ENCODE measurements at regions of chr1 and their contacts with region 1.

Region 1: GRCh38 chr1:95223110-95223509 is 10.9 kb upstream of the RWDD3 start:
- DNase-seq: no peak
- H3K4me3 ChIP-seq: no peak overlapping the region
- H3K27ac ChIP-seq: no peak overlapping the region
- H3K4me1 ChIP-seq: no peaks in the 10 kb centered on the region
- H3K27me3 ChIP-seq: no peaks in the 10 kb centered on the region
- CTCF ChIP-seq: no peak

Region 2: GRCh38 chr1:95179205-95179986 is 43.7 kb before region 1 on chr1:
- intact Hi-C with region 1: loop called (anchors 10 kb)
- DNase-seq: no peak
- H3K4me3 ChIP-seq: no peak overlapping the region
- H3K27ac ChIP-seq: no peak overlapping the region
- H3K4me1 ChIP-seq: peaks cover 0 to 16% (median 9%) of the 10 kb centered on the region in 4 donors
- H3K27me3 ChIP-seq: no peaks in the 10 kb centered on the region
- CTCF ChIP-seq: no peak

Measured in tibial artery (tissue), 4 donors.